T-cell (primary cell): ENCODE measurements at regions of chr18 and their contacts with region 1.

Region 1: GRCh38 chr18:10965119-10965518 is 184.2 kb downstream of the PIEZO2 start:
- DNase-seq: no peak
- ATAC-seq: no peak
- H3K4me3 ChIP-seq: no peak overlapping the region
- H3K4me3 Mint-ChIP-seq: no peak overlapping the region
- H3K27ac ChIP-seq: no peak overlapping the region
- H3K27ac Mint-ChIP-seq: no peak overlapping the region
- H3K4me1 ChIP-seq: no peaks in the 10 kb centered on the region
- H3K4me1 Mint-ChIP-seq: no peaks in the 10 kb centered on the region
- H3K27me3 ChIP-seq: no peaks in the 10 kb centered on the region
- H3K27me3 Mint-ChIP-seq: no peaks in the 10 kb centered on the region

Region 2: GRCh38 chr18:11245879-11246278 is 280.8 kb after region 1 on chr18:
- CTCF ChIA-PET with region 1: no interaction called
- POLR2A ChIA-PET with region 1: interaction called in 1 of 2 experiments, 15 read pairs
- DNase-seq: no peak
- ATAC-seq: no peak
- H3K4me3 ChIP-seq: no peak overlapping the region
- H3K4me3 Mint-ChIP-seq: no peak overlapping the region
- H3K27ac ChIP-seq: no peak overlapping the region
- H3K27ac Mint-ChIP-seq: no peak overlapping the region
- H3K4me1 ChIP-seq: no peaks in the 10 kb centered on the region
- H3K4me1 Mint-ChIP-seq: no peaks in the 10 kb centered on the region
- H3K27me3 ChIP-seq: no peaks in the 10 kb centered on the region
- H3K27me3 Mint-ChIP-seq: peaks cover 2 to 6% of the 10 kb centered on the region in 2 donors